ENCODE measurements at regions of chr10 and their contacts with region 1.

Region 1: DNA sequence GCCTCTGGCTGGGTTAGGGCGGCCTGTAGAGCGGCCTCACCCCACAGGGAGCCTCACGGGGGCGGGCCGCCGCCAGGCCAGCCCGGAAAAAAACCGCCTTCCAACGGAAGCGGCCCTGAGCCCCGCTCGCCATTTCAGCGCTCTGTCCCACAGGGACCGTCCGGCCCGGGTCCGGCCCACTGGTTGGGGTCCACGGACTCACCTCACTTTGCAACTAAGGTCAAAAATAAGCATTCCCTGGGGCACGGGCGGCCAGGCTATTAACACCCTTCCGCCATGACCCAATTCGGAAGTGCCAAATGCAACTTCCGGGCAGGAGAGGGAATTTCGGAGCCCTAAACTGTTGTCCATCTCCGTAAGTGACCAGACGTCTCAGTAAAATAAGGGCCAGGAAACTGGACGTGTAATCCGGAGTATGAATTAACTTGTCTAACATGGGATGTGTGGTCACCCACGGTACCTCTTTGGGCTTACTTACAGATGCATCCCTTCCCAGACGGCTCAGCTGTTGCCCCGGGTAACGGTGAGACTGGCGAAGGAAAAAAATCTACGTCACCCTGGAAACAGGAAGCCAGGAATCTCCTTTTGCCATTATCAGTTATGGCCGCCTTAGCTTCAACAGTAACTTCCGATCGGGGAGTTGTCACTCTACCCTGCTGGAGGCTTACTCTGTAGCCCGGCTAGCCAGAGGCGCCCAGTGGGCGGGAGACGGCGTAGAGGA is at the start of gene BBIP1:
- DNase-seq: no peak
- H3K4me3 Mint-ChIP-seq: peak within 1 kb of the TSS; percentile 97
- H3K27ac Mint-ChIP-seq: peak within 1 kb of the TSS; percentile 97
- H3K4me1 Mint-ChIP-seq: peaks cover 47% of the 10 kb centered on the region
- H3K27me3 Mint-ChIP-seq: no peaks in the 10 kb centered on the region
- total RNA-seq, gene BBIP1: 31.0 and 36.3 TPM in 2 replicates

Region 2: GRCh38 chr10:110007701-110008517 is 910.9 kb before region 1 on chr10 and contains the start of gene ADD3:
- intact Hi-C with region 1: loop called (anchors 1 kb)
- DNase-seq: peak; percentile 81
- H3K4me3 Mint-ChIP-seq: peak within 1 kb of the TSS; percentile 93
- H3K27ac Mint-ChIP-seq: peak within 1 kb of the TSS; percentile 81
- H3K4me1 Mint-ChIP-seq: peaks cover 47% of the 10 kb centered on the region
- H3K27me3 Mint-ChIP-seq: peaks cover 2% of the 10 kb centered on the region
- total RNA-seq, gene ADD3: 30.1 and 36.6 TPM in 2 replicates

Region 3: GRCh38 chr10:110225756-110226542 is 692.9 kb before region 1 on chr10:
- intact Hi-C with region 1: loop called (anchors 1 kb)
- DNase-seq: peak; percentile 84
- H3K4me3 Mint-ChIP-seq: peak overlapping the region; percentile 92
- H3K27ac Mint-ChIP-seq: peak overlapping the region; percentile 97
- H3K4me1 Mint-ChIP-seq: peaks cover 47% of the 10 kb centered on the region
- H3K27me3 Mint-ChIP-seq: peaks cover 4% of the 10 kb centered on the region

Region 4: DNA sequence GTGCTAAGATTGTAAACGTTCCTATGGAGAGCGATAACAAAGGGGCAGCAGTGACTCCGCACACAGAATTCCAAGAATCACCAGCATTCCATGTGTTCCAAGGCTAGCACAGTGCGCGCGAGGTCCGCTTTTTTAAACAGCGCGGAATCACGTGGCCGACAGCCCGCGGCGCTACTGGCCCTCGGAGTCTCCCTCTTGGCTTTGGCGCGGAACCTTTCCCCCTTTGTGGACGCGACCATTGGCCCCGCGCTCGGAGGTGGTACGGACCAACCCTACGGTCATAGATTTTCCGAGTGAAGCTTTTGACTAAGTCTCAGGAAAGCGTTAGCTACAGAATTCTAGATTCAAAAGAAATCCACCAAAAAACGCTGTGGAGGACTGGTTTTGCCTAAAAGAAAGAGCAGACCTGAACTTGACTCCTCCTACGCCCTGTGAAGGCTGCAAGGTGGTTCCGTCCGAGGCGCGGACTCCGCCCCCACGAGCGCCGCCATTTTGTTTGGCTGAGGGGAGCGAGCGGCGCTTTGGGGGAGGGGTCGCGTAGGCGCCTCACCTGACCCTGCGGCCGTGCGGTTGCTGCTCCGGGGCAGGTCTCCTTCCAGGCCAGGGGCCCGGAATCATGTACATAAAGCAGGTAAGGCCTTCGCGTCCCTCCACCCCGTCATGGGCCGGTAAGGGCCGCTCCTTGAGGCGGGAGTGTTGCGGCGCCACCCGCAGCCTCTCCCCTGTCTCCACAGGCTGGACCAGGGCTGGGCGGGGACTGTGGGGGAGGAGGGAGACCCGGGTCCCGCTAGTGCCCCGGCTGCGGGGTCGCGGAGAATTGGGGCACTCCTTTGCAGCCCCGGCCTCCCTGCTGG is 351.4 kb before region 1 on chr10 and contains the start of gene SMC3:
- intact Hi-C with region 1: loop called (anchors 1 kb)
- DNase-seq: peak; percentile 89
- H3K4me3 Mint-ChIP-seq: peak within 1 kb of the TSS; percentile 93
- H3K27ac Mint-ChIP-seq: peak within 1 kb of the TSS; percentile 96
- H3K4me1 Mint-ChIP-seq: peaks cover 44% of the 10 kb centered on the region
- H3K27me3 Mint-ChIP-seq: peaks cover 14% of the 10 kb centered on the region
- total RNA-seq, gene SMC3: 74.5 and 77.9 TPM in 2 replicates

Region 5: GRCh38 chr10:110774069-110775019 is 144.5 kb before region 1 on chr10:
- intact Hi-C with region 1: loop called (anchors 1 kb)
- DNase-seq: peak; percentile 57
- H3K4me3 Mint-ChIP-seq: peak overlapping the region; percentile 53
- H3K27ac Mint-ChIP-seq: peak overlapping the region; percentile 96
- H3K4me1 Mint-ChIP-seq: peaks cover 62% of the 10 kb centered on the region
- H3K27me3 Mint-ChIP-seq: peaks cover 4% of the 10 kb centered on the region

Region 6: DNA sequence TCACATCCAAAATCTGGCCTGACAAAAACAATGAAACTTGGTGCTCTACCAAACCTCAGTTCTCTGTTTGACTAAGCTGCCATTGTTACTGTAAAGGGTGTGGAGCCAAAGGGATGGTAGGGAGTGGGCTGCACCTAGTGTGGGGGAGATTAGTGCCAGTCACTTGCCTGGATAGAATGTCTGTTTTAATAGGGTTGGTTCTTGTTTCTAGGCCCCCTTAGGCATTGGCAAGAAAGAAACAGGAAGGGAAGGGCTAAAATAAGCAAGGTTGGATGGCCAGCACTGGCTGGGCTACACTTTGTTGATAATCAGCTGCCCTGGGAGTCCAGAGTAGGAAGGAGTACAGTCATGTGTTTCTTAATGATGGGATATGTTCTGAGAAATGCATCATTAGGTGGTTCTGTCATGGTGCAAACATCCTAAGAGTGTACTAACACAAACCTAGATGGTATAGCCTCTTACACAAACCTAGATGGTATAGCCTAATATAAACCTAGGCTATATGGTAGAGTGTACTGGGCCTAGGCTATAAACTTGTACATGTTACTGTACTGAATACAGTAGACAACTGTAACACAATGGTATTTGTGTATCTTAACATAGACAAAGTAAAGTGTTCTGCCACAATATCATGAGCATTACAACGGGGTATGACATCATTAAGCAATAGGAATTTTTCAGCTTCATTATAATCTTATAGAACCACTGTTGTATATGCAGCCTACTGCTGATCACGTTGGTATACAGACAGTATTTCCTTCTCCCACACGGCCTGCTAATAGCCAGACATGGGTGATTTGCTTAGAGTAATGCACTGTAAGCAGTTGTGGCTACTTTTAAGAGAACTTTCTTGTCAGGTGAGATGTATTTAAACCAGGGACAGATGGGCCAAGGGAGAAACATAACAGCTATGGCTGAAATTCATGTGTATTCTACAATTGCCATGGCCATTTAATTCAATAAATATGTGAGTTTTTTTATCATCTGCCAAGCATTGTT is 15.2 kb before region 1 on chr10:
- intact Hi-C with region 1: loop called (anchors 1 kb)
- DNase-seq: no peak
- H3K4me3 Mint-ChIP-seq: no peak overlapping the region
- H3K27ac Mint-ChIP-seq: peak overlapping the region; percentile 49
- H3K4me1 Mint-ChIP-seq: peaks cover 34% of the 10 kb centered on the region
- H3K27me3 Mint-ChIP-seq: no peaks in the 10 kb centered on the region

Region 7: GRCh38 chr10:112183329-112184051 is 1264.7 kb after region 1 on chr10 and contains the start of gene GPAM:
- intact Hi-C with region 1: loop called (anchors 10 kb)
- DNase-seq: peak; percentile 98
- H3K4me3 Mint-ChIP-seq: peak within 1 kb of the TSS; percentile 86
- H3K27ac Mint-ChIP-seq: peak within 1 kb of the TSS; percentile 93
- H3K4me1 Mint-ChIP-seq: peaks cover 34% of the 10 kb centered on the region
- H3K27me3 Mint-ChIP-seq: peaks cover 4% of the 10 kb centered on the region
- total RNA-seq, gene GPAM: 10.2 and 10.5 TPM in 2 replicates